IMR-90 (cell line): ENCODE measurements at regions of chr11 and their contacts with region 1.

Region 1: GRCh38 chr11:32052218-32052617 is 38.7 kb upstream of the RCN1 start:
- DNase-seq: peak; percentile 58
- ATAC-seq: peak; percentile 81
- H3K4me3 ChIP-seq: no peak overlapping the region
- H3K27ac ChIP-seq: no peak overlapping the region
- H3K4me1 ChIP-seq: no peaks in the 10 kb centered on the region
- H3K27me3 ChIP-seq: peaks cover 63% of the 10 kb centered on the region
- CTCF ChIP-seq: peak; percentile 86
- POLR2A ChIP-seq: no peak
- RAD21 ChIP-seq: peak; percentile 84

Region 2: DNA sequence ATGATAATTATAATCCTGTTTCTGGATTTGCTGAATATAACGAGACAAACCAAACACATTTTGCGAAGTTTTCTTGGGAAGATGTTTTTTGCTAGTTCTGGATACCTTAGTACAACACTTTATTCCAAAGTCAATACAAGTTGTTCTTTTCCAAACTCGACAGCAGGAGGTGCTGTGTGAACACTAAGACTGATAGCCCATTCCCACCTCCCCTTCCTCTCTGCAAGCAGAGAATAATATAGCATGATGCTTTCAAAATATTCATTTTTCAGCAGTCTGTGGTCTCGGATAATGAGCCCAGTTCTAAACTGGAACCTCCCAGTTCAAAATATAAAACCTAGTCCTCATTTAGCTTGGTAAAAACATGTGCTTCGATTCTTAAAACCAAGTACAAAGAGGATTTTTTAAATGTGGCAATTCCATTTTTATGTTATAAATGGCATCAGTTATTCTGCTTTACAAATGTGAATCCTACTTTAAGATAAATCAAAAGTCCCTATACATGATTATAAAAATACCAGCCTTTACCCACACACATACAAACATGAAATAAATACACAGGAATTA is 811.8 kb before region 1 on chr11:
- CTCF ChIA-PET with region 1: no interaction called
- POLR2A ChIA-PET with region 1: no interaction called
- dilution Hi-C with region 1: no loop called
- in situ Hi-C with region 1: no loop called
- intact Hi-C with region 1: loop called (anchors 5 kb)
- DNase-seq: peak; percentile 33
- ATAC-seq: no peak; the same call in 1 of the 2 replicates
- H3K4me3 ChIP-seq: no peak overlapping the region
- H3K27ac ChIP-seq: no peak overlapping the region
- H3K4me1 ChIP-seq: no peaks in the 10 kb centered on the region
- H3K27me3 ChIP-seq: no peaks in the 10 kb centered on the region
- CTCF ChIP-seq: peak; percentile 45
- POLR2A ChIP-seq: no peak
- RAD21 ChIP-seq: peak; percentile 43; the same call in 1 of the 2 replicates

Region 3: GRCh38 chr11:32184041-32184722 is 132.0 kb after region 1 on chr11:
- CTCF ChIA-PET with region 1: no interaction called
- POLR2A ChIA-PET with region 1: no interaction called
- dilution Hi-C with region 1: no loop called
- in situ Hi-C with region 1: no loop called
- intact Hi-C with region 1: no loop called
- DNase-seq: no peak
- ATAC-seq: no peak
- H3K4me3 ChIP-seq: no peak overlapping the region
- H3K27ac ChIP-seq: no peak overlapping the region
- H3K4me1 ChIP-seq: no peaks in the 10 kb centered on the region
- H3K27me3 ChIP-seq: peaks cover 27% of the 10 kb centered on the region
- CTCF ChIP-seq: no peak
- POLR2A ChIP-seq: no peak
- RAD21 ChIP-seq: no peak

Region 4: DNA sequence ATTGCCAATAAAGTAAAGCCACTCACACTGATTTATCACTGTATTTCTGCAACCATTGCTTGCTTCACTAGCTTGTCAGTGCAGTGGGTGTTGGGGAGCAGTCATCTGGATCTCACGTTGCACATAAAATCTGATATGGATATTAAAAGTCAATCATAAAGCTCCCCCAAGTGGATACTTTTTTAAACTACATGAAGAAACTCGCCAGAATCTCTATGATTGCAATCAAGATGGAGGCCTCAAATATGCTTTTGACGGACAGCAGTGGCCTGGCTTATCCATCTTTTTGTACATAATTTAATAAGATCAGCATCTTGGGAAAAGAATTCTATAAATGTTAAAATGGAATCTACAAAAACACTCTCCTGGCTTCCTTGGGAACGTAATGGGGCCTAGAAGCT is 245.4 kb after region 1 on chr11:
- CTCF ChIA-PET with region 1: no interaction called
- POLR2A ChIA-PET with region 1: no interaction called
- dilution Hi-C with region 1: no loop called
- in situ Hi-C with region 1: no loop called
- intact Hi-C with region 1: loop called (anchors 2 kb)
- DNase-seq: peak; percentile 36
- ATAC-seq: peak; percentile 71
- H3K4me3 ChIP-seq: no peak overlapping the region
- H3K27ac ChIP-seq: no peak overlapping the region
- H3K4me1 ChIP-seq: no peaks in the 10 kb centered on the region
- H3K27me3 ChIP-seq: peaks cover 2% of the 10 kb centered on the region; the same call in 1 of the 2 replicates
- CTCF ChIP-seq: peak; percentile 41
- POLR2A ChIP-seq: no peak
- RAD21 ChIP-seq: peak; percentile 25; the same call in 1 of the 2 replicates